ENCODE measurements at regions of chr3 and their contacts with region 1.

Region 1: GRCh38 chr3:100254168-100254777 is 6.5 kb upstream of the TBC1D23 start:
- DNase-seq: peak in 3 of 6 donors; percentile 35 to 47 (median 37)
- ATAC-seq: peak; percentile 71 to 97 (median 94)
- H3K4me3 ChIP-seq: no peak overlapping the region
- H3K27ac ChIP-seq: no peak overlapping the region
- H3K4me1 ChIP-seq: no peaks in the 10 kb centered on the region
- H3K27me3 ChIP-seq: no peaks in the 10 kb centered on the region
- CTCF ChIP-seq: peak in 3 of 4 donors; percentile 45 to 60 (median 45)

Region 2: GRCh38 chr3:99833617-99834205 is 420.6 kb before region 1 on chr3:
- intact Hi-C with region 1: loop called in 1 of 3 experiments (anchors 10 kb)
- DNase-seq: no peak
- ATAC-seq: peak in 2 of 4 donors; percentile 20 to 25
- H3K4me3 ChIP-seq: no peak overlapping the region
- H3K27ac ChIP-seq: peak overlapping the region in 2 of 4 donors; percentile 2 to 4
- H3K4me1 ChIP-seq: peaks cover 3 to 7% (median 3%) of the 10 kb centered on the region in 3 donors
- H3K27me3 ChIP-seq: no peaks in the 10 kb centered on the region
- CTCF ChIP-seq: no peak

Region 3: DNA sequence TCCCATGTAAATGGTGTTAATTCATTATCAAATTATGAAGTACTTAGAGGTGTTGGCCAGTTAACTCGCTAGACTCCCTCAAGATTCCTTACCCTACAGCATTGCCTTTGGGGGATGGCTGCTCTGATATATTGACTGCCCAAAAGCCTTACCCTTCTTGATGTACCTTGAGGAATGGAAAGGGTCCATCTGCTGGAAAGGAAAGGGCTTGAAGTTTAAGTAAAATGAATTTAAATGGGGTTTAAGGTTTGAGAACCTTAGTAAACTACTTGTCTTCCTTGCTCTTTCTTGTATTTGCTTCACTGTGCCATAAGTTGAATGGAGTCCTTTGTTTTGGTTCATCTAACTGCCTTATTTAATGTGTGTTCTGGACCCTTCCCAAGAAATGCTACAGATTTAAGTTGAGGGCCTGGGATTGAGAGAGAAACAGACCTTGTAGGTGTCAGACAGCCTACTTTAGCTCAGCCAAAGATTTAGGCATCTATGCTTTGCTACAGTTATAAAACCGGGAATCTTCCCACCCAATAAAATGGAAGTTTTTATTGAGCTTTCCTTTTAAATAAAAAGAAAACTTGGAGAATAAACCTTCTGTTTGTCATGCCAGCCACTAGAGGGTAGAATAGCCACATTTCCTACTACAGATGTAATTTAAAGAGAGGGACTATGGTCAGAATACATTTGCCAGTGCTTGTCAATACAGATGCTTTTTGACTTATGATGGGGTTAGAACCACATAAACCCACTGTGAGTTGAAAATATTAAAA is 411.3 kb before region 1 on chr3:
- intact Hi-C with region 1: loop called in 2 of 3 experiments (anchors 5 to 10 kb)
- DNase-seq: no peak
- ATAC-seq: peak; percentile 83 to 90 (median 86)
- H3K4me3 ChIP-seq: peak overlapping the region in 1 of 4 donors; percentile 14
- H3K27ac ChIP-seq: peak overlapping the region in 2 of 4 donors; percentile 47 to 75
- H3K4me1 ChIP-seq: peaks cover 10 to 19% (median 14%) of the 10 kb centered on the region in 3 donors
- H3K27me3 ChIP-seq: no peaks in the 10 kb centered on the region
- CTCF ChIP-seq: peak; percentile 9 to 34 (median 32)

Region 4: GRCh38 chr3:99850608-99851007 is 403.7 kb before region 1 on chr3:
- intact Hi-C with region 1: loop called in 1 of 3 experiments (anchors 5 kb)
- DNase-seq: no peak
- ATAC-seq: no peak
- H3K4me3 ChIP-seq: no peak overlapping the region
- H3K27ac ChIP-seq: no peak overlapping the region
- H3K4me1 ChIP-seq: peaks cover 0 to 5% (median 0%) of the 10 kb centered on the region in 3 donors
- H3K27me3 ChIP-seq: no peaks in the 10 kb centered on the region
- CTCF ChIP-seq: no peak

Region 5: GRCh38 chr3:100068826-100069225 is 185.4 kb before region 1 on chr3:
- intact Hi-C with region 1: loop called (anchors 10 kb)
- DNase-seq: peak; percentile 60 to 82 (median 72)
- ATAC-seq: peak; percentile 83 to 96 (median 94)
- H3K4me3 ChIP-seq: no peak overlapping the region
- H3K27ac ChIP-seq: no peak overlapping the region
- H3K4me1 ChIP-seq: no peaks in the 10 kb centered on the region
- H3K27me3 ChIP-seq: no peaks in the 10 kb centered on the region
- CTCF ChIP-seq: peak; percentile 50 to 57 (median 53)

Region 6: DNA sequence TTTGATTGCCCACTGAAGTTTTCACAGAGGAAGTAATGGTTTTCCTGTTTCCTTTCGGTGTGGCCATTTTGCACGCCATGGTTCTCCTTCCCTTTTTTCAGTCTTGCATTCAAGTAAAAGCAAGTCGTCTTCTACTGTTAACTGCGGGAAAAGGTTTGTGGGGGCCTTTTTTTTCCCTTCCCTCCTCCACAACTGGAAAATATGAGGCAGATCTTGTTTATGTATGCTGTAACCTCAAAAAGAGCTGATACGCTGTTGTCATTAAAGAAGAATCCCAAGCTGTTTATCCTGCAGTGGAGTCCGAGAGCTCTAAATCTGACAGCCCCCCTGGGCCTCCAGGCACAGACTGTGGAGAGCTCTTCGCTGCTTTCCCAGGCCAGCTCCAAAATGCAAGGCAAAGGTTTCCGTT is 180.4 kb before region 1 on chr3:
- intact Hi-C with region 1: loop called (anchors 10 kb)
- DNase-seq: no peak
- ATAC-seq: peak in 2 of 4 donors; percentile 23 to 39
- H3K4me3 ChIP-seq: no peak overlapping the region
- H3K27ac ChIP-seq: peak overlapping the region in 1 of 4 donors; percentile 27
- H3K4me1 ChIP-seq: peaks cover 0 to 7% (median 5%) of the 10 kb centered on the region in 3 donors
- H3K27me3 ChIP-seq: no peaks in the 10 kb centered on the region
- CTCF ChIP-seq: no peak

Region 7: DNA sequence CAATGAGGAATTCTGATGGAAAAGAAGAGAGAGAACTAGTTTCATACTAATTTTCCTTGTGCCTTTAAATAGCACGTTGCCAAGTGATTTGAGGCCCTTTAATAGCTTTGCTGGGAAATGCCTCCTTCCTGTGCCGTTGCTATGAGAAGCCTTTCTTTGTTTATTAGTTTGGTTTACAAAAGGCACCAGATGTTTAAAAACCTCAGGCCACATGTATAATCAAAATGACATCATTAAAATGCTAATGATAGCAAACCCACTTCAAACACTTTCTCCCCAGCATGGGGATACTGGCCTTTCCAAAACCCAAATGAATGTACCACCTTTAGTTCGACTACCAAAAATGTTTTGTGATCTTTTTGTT is 43.5 kb before region 1 on chr3:
- intact Hi-C with region 1: no loop called
- DNase-seq: no peak
- ATAC-seq: peak in 3 of 4 donors; percentile 37 to 83 (median 71)
- H3K4me3 ChIP-seq: no peak overlapping the region
- H3K27ac ChIP-seq: peak overlapping the region in 2 of 4 donors; percentile 24 to 25
- H3K4me1 ChIP-seq: peaks cover 0 to 7% (median 0%) of the 10 kb centered on the region in 3 donors
- H3K27me3 ChIP-seq: no peaks in the 10 kb centered on the region
- CTCF ChIP-seq: no peak

Region 8: GRCh38 chr3:100463002-100463401 is 208.7 kb after region 1 on chr3:
- intact Hi-C with region 1: no loop called
- DNase-seq: peak in 3 of 6 donors; percentile 23 to 33 (median 28)
- ATAC-seq: peak; percentile 79 to 99 (median 98)
- H3K4me3 ChIP-seq: no peak overlapping the region
- H3K27ac ChIP-seq: no peak overlapping the region
- H3K4me1 ChIP-seq: no peaks in the 10 kb centered on the region
- H3K27me3 ChIP-seq: no peaks in the 10 kb centered on the region
- CTCF ChIP-seq: peak; percentile 36 to 66 (median 58)

Measured in pancreas (tissue), 10 donors.